Ascending aorta (tissue), 2 donors: ENCODE measurements at regions of chr6 and their contacts with region 1.

Region 1: DNA sequence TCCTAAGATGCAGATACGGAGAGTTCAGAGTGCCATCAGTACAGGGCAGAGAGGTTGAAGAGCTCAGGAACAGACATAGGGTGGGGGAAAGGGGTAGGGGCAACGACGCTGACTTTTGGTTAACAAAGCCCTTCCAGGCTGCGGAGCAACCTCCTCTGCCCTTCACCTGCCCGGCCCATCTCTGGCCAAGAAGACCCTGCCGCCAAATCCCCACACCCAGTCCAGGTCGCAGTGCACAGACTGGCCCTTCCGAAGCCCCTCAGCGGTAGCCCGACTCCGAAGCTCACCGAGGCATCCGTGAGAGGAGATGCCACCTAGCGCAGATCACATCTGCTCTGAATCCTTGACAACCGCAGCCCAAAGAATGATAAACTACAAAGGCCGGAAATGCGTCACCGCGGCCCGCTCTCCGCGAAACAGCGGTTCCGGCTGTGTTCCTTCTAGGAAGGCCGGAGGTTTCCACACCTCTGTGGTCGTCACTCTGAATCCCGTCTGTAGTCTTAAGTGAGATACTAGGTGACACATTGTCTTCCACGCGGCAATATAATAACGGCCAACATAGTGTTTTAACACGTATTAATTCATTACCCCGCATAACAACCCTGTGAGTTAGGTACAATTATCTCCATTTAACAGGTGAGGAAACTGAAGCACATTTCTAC is at the start of gene ZSCAN23:
- DNase-seq: peak in 1 of 2 donors; percentile 89
- H3K4me3 ChIP-seq: peak within 1 kb of the TSS; percentile 60 to 83
- H3K27ac ChIP-seq: peak within 1 kb of the TSS in 1 of 2 donors; percentile 59
- H3K4me1 ChIP-seq: no peaks in the 10 kb centered on the region
- H3K27me3 ChIP-seq: no peaks in the 10 kb centered on the region
- CTCF ChIP-seq: no peak
- total RNA-seq, gene ZSCAN23: not detected

Region 2: DNA sequence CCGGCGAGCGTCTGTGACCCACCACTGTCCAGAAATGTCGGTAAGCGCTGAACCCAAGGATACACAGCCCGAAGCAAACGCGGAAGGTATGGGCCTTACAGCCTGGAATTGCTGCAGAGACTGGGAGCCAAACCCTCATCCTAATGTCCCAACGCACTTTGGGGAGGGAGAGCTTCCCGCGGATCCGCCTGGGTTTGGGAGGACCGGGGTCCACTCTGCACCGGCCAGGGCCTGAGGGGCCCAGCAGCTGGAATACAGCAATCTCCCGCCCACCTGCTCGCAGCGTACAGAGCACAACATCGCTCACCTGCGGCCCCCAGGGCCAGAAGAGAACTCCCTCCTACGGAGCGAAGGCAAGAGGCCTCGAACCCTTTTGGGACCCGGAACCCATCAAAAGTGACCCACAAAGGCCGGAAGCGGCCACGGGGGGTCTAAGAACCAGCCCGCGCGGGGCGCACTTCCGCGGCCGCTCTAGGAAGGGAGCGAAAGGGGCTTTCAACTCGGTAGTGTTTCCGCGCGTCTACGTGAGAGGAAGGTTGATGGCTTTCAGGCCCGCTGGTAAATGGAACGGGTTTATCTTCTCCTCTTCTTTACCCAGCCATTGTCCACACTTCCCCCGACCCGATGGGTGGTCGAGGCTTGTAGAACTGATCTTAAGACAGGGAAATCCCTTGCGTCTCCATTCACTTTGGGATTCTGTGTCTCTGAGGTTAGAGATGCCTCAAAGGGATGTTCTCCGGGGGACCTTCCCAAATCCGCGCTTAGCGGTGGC is 43.7 kb before region 1 on chr6 and contains the start of gene ZSCAN12:
- intact Hi-C with region 1: loop called (anchors 2 kb)
- DNase-seq: peak; percentile 17 to 90
- H3K4me3 ChIP-seq: peak within 1 kb of the TSS; percentile 76 to 84
- H3K27ac ChIP-seq: peak within 1 kb of the TSS in 1 of 2 donors; percentile 59
- H3K4me1 ChIP-seq: peaks cover 0 to 13% of the 10 kb centered on the region in 2 donors
- H3K27me3 ChIP-seq: no peaks in the 10 kb centered on the region
- CTCF ChIP-seq: peak; percentile 34 to 49 (median 37)
- total RNA-seq, gene ZSCAN12: 5.3 TPM

Region 3: DNA sequence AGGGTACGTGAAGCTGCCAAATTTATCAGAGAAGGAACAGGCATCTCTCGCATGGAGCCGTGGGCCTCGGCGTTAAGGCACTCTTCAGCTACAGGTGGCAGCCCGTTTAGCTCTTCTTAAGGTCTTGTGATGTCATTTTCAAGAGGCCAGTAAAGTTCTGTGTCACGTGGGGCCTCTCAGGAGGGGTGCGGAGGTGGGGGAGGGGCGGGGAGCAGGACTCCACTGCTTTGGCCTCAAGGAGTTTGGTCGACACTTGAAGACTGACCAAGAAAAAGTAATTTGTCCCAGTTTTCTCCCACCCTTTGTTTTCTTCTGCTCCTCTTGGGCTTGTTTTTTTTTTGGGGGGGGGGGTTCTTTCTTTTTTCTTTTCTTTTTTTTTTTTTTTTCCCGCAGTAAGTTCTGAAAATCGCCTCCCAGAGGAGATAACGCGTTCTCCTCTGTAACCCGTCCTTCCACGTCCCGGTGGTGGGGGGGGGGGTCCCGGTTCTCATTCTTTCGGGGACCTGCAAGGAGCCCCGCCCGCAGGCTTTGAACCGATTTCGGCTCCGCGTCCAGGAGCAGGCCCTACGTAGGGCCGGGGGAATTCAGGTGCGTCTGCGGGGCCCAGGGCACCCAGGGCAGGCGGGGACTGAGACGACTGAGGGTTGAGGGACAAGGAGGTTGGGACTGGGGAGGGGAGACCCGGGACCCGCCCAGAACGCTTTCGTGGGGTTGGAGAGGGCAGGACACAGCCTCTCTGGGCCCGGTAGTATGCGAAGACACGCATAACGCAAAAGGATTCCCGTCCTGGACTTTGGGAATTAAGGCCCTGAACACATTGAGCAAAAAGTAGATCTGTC is 46.3 kb after region 1 on chr6:
- intact Hi-C with region 1: no loop called
- DNase-seq: no peak
- H3K4me3 ChIP-seq: peak overlapping the region; percentile 21 to 25
- H3K27ac ChIP-seq: no peak overlapping the region
- H3K4me1 ChIP-seq: no peaks in the 10 kb centered on the region
- H3K27me3 ChIP-seq: no peaks in the 10 kb centered on the region
- CTCF ChIP-seq: no peak